Panc1 (cell line): ENCODE measurements at regions of chr16 and their contacts with region 1.

Region 1: DNA sequence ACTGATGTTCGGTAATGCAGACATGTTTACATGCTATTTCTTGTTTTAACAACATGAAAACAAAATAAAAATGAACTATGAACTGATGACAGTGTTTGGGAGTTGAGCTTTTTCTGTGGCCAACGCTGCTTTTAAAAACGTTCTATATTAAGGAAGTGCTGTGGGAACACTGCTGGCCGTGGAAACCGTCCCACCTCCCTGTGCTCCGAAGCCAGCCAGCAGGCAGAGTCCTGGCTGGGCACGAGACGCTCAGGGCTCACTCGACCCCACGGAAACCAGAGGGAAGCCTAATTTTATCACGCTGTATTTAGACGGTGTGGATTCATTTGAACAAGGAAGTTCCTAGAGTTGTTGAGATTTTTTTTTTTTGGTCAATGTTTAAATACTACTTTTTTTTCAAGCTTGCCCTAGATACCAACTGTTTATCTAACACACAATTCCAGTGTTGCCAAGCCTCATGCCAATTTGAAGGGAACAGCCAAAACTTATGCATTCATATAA is 25.8 kb downstream of the ADCY9 start:
- DNase-seq: no peak
- ATAC-seq: 0 out of 2 replicates have a peak, but pooled peaks have one; percentile 28
- H3K4me3 ChIP-seq: no peak overlapping the region; a peak in 1 of 4 replicates
- H3K27ac ChIP-seq: peak overlapping the region; percentile 89
- H3K4me1 ChIP-seq: peaks cover 50% of the 10 kb centered on the region
- H3K27me3 ChIP-seq: no peaks in the 10 kb centered on the region
- CTCF ChIP-seq: no peak

Region 2: GRCh38 chr16:3954413-3954921 is 135.9 kb before region 1 on chr16:
- CTCF ChIA-PET with region 1: no interaction called
- POLR2A ChIA-PET with region 1: no interaction called
- in situ Hi-C with region 1: no loop called
- intact Hi-C with region 1: no loop called
- DNase-seq: no peak
- ATAC-seq: no peak
- H3K4me3 ChIP-seq: no peak overlapping the region
- H3K27ac ChIP-seq: no peak overlapping the region; the same call in 1 of the 2 replicates
- H3K4me1 ChIP-seq: peaks cover 11% of the 10 kb centered on the region
- H3K27me3 ChIP-seq: no peaks in the 10 kb centered on the region
- CTCF ChIP-seq: no peak

Region 3: GRCh38 chr16:4004206-4004605 is 86.2 kb before region 1 on chr16:
- CTCF ChIA-PET with region 1: no interaction called
- POLR2A ChIA-PET with region 1: interaction called, 13 read pairs
- in situ Hi-C with region 1: no loop called
- intact Hi-C with region 1: no loop called
- DNase-seq: no peak
- ATAC-seq: no peak
- H3K4me3 ChIP-seq: no peak overlapping the region
- H3K27ac ChIP-seq: no peak overlapping the region
- H3K4me1 ChIP-seq: 0 out of 2 replicates have a peak, but pooled peaks cover 3% of the 10 kb centered on the region
- H3K27me3 ChIP-seq: no peaks in the 10 kb centered on the region
- CTCF ChIP-seq: no peak

Region 4: GRCh38 chr16:4019371-4019791 is 71.0 kb before region 1 on chr16:
- CTCF ChIA-PET with region 1: no interaction called
- POLR2A ChIA-PET with region 1: no interaction called
- in situ Hi-C with region 1: no loop called
- intact Hi-C with region 1: loop called (anchors 10 kb)
- DNase-seq: no peak
- ATAC-seq: peak; percentile 60
- H3K4me3 ChIP-seq: peak overlapping the region; percentile 17 to 51
- H3K27ac ChIP-seq: peak overlapping the region; percentile 80
- H3K4me1 ChIP-seq: peaks cover 38% of the 10 kb centered on the region
- H3K27me3 ChIP-seq: no peaks in the 10 kb centered on the region
- CTCF ChIP-seq: no peak

Region 5: DNA sequence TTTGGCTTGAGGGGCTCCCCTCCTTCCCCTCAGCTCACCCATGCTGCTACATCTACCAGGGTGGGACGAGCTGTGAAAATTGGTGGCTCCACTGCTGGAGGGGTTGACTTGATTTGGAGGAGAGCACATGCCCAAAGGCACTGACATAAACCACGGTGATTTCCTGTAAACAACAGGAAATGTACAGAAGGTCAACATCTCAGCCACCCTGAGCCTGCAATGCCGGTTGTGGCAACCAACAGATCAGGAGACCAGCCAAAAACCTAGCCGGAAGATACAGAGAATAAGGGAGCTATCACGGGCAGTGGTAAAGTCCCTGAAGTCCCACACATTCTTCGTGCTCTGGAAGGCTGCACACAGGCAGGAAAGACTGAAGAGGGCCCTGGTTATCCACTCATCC is 30.4 kb before region 1 on chr16:
- CTCF ChIA-PET with region 1: interaction called, 3 read pairs
- POLR2A ChIA-PET with region 1: interaction called, 11 read pairs
- in situ Hi-C with region 1: no loop called
- intact Hi-C with region 1: no loop called
- DNase-seq: no peak
- ATAC-seq: peak; percentile 40
- H3K4me3 ChIP-seq: no peak overlapping the region
- H3K27ac ChIP-seq: peak overlapping the region; percentile 72
- H3K4me1 ChIP-seq: peaks cover 24% of the 10 kb centered on the region
- H3K27me3 ChIP-seq: no peaks in the 10 kb centered on the region
- CTCF ChIP-seq: no peak